Pancreas (tissue), 10 donors: ENCODE measurements at regions of chrX and their contacts with region 1.

Region 1: DNA sequence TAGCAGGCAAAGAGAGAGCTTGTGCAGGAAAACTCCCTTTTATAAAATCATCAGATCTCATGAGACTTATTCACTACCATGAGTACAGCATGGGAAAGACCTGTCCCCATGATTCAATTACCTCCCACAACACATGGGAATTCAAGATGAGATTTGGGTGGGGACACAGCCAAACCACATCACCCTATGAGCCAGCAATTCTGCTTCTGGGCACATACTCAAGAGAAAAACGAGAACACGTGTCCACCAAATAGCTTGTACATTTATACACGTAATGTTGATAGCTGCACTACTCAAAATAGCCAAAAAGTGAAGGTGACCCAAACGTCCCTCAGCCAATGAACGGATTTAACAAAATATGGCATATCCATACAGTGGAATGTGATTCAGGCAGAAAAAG is 94.5 kb upstream of the DHRSX start:
- DNase-seq: no peak
- ATAC-seq: no peak
- H3K4me3 ChIP-seq: no peak overlapping the region
- H3K27ac ChIP-seq: no peak overlapping the region
- H3K4me1 ChIP-seq: peaks cover 0 to 2% (median 0%) of the 10 kb centered on the region in 3 donors
- H3K27me3 ChIP-seq: no peaks in the 10 kb centered on the region
- CTCF ChIP-seq: no peak

Region 2: DNA sequence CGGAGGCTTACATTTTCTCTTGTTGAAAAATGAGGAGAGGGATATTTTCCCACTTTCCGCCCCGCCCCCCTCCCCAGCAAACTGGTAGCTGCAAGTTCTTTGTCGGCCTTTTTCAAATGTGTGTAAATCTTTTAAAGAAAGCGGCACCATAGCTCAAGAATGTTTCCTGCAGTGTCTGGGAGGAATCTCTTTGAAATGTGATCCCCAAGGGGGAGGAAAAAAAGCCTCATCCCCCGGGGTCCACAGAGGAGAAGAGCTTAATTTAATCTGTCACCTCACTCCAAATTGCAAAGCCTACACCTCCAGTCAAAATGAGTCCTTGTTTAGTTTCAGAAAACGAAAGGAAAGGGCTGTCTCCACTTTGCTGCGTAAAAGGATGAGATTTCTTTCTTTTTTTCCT is 945.6 kb before region 1 on chrX:
- intact Hi-C with region 1: loop called in 2 of 3 experiments (anchors 10 kb)
- DNase-seq: no peak
- ATAC-seq: no peak
- H3K4me3 ChIP-seq: no peak overlapping the region
- H3K27ac ChIP-seq: no peak overlapping the region
- H3K4me1 ChIP-seq: no peaks in the 10 kb centered on the region
- H3K27me3 ChIP-seq: peaks cover 0 to 4% (median 0%) of the 10 kb centered on the region in 4 donors
- CTCF ChIP-seq: no peak

Region 3: DNA sequence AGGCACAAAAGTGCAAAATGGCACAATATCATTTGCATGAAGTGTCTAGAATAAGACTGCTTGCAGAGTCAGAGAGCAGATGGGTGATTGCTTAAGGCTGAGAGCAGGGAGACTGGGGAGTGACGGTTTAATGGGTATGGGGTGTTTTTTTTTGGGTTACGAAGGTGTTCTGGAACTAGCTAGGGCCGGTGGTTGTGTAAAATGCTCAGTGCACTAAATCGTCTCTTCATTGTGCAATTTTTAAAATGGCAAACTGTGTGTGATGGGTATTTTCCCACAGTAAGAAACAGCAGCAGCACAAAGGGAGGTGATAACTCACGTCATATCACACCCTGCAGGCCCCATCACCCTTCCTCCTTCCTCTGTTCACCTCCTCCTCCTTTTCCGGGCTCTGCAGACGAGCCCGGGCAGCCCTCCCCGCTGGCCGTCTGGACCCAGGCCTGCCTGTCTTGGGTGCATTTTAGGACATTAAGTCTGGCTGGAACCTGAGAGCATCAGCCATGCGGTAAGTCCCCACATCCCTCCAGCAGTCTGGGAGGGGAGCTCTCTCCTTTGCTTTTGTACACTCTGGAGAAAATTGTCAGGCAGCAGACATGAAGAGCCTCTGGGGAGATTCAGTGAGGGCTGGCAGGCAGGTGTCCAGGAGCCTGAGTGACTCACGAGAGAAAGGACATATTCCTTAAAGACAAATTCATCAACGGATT is 937.7 kb before region 1 on chrX:
- intact Hi-C with region 1: loop called in 1 of 3 experiments (anchors 10 kb)
- DNase-seq: no peak
- ATAC-seq: peak in 1 of 4 donors; percentile 19
- H3K4me3 ChIP-seq: no peak overlapping the region
- H3K27ac ChIP-seq: no peak overlapping the region
- H3K4me1 ChIP-seq: no peaks in the 10 kb centered on the region
- H3K27me3 ChIP-seq: peaks cover 0 to 3% (median 0%) of the 10 kb centered on the region in 4 donors
- CTCF ChIP-seq: no peak

Region 4: DNA sequence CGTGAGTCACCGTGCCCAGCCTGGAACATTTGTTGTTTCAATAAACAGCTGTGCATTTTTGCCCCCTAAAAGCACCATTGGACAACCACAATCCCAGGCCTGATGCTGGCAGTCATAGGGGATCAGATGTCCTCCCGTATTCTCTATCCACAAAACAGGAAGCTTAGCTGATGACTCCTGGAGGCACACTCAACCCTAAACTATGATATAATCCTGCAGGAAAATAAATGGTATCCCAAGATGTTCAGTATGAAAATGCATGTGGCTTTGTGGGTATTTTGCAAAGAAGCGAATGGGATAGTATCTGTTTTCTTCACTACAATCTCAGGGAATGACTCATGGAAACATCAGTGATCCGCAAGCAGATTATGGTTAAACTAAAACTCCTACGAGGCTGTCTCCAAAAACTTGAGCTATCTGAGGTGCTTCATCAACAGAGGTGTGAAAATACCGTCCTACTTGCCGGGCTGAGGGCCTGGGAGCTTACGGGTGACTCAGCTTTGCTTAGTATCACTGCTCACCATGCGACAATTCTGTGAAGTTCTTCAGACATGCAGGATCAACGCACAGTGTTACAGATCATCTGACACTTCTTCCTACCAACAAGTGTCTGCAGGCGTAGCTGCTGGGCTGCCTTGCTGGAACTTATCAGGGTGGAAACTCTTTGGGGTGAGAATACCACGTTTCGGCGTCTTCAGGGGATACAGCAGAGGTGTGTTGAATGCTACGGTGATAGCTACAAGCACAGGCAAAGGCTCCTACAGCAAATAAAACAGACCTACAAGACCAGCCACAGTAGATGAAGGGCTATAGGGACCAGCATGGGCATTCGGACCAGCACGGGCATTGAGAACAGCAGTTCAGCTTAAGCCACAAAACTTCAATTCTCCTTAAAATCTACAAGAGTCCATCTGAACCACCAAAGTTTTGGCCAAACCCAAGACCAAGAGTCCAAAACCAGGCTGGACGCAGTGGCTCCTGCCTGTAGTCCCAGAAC is 243.0 kb before region 1 on chrX:
- intact Hi-C with region 1: no loop called
- DNase-seq: no peak
- ATAC-seq: no peak
- H3K4me3 ChIP-seq: no peak overlapping the region
- H3K27ac ChIP-seq: no peak overlapping the region
- H3K4me1 ChIP-seq: no peaks in the 10 kb centered on the region
- H3K27me3 ChIP-seq: no peaks in the 10 kb centered on the region
- CTCF ChIP-seq: no peak

Region 5: DNA sequence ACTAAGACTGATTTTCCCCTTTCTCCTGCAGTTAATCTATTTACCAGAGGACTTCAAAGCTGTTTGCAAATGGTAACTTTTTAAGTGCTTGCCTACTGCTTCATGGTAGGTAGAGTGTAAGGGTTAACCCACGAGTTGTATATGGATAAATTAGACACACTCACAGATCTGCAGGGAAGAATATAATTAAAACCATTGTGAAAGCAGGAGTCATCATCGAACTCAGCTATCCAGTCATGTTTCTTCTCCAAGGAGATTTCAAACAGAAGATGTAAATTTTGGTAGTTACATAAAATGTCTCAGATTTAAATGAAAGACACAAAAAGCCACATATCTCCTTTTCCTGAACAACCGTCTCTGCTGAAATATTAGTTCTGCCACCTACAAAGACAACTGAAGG is 156.0 kb after region 1 on chrX:
- intact Hi-C with region 1: no loop called
- DNase-seq: no peak
- ATAC-seq: no peak
- H3K4me3 ChIP-seq: no peak overlapping the region
- H3K27ac ChIP-seq: no peak overlapping the region
- H3K4me1 ChIP-seq: peaks cover 0 to 2% (median 0%) of the 10 kb centered on the region in 3 donors
- H3K27me3 ChIP-seq: no peaks in the 10 kb centered on the region
- CTCF ChIP-seq: no peak